ENCODE measurements at regions of chr1 and their contacts with region 1.

Region 1: DNA sequence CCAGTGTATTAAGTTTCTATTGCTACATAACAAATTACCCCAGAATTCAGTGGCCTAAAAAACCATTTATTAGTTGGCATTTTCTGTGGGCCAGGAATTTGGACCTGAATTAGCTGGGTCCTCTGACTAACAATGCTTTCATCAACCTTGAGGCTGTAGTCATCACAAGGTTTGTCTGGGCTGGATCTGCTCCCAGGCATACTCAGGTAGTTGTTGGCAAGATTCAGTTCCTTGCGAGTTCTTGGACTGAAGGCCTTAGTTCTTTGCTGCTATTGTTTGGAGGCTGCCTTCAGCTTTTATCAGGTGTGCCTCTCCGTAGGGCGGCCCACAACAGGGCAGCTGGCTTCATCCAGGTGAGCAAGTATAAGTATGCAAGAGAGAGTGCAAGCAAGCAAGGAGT is 31.4 kb upstream of the DEPDC1 start:
- DNase-seq: no peak
- ATAC-seq: no peak
- H3K4me3 ChIP-seq: no peak overlapping the region
- H3K27ac ChIP-seq: no peak overlapping the region
- H3K4me1 ChIP-seq: no peaks in the 10 kb centered on the region
- H3K27me3 ChIP-seq: no peaks in the 10 kb centered on the region
- CTCF ChIP-seq: no peak
- EP300 ChIP-seq: no peak
- POLR2A ChIP-seq: no peak
- RAD21 ChIP-seq: no peak

Region 2: GRCh38 chr1:68496680-68497357 is 31.4 kb before region 1 on chr1 and contains the start of gene DEPDC1:
- CTCF ChIA-PET with region 1: no interaction called
- POLR2A ChIA-PET with region 1: no interaction called
- in situ Hi-C with region 1: no loop called
- intact Hi-C with region 1: no loop called
- DNase-seq: peak; percentile 86
- ATAC-seq: peak; percentile 98
- H3K4me3 ChIP-seq: peak within 1 kb of the TSS; percentile 73 to 98 (median 90)
- H3K27ac ChIP-seq: peak within 1 kb of the TSS; percentile 77
- H3K4me1 ChIP-seq: peaks cover 21% of the 10 kb centered on the region
- H3K27me3 ChIP-seq: no peaks in the 10 kb centered on the region; a peak in 1 of 5 replicates
- CTCF ChIP-seq: peak; percentile 23
- EP300 ChIP-seq: no peak
- POLR2A ChIP-seq: peak; percentile 63 to 75; a peak in 3 of 4 replicates
- RAD21 ChIP-seq: peak; percentile 45; the same call in 1 of the 2 replicates
- total RNA-seq, gene DEPDC1: 20.2 and 28.0 TPM in 2 replicates

Region 3: DNA sequence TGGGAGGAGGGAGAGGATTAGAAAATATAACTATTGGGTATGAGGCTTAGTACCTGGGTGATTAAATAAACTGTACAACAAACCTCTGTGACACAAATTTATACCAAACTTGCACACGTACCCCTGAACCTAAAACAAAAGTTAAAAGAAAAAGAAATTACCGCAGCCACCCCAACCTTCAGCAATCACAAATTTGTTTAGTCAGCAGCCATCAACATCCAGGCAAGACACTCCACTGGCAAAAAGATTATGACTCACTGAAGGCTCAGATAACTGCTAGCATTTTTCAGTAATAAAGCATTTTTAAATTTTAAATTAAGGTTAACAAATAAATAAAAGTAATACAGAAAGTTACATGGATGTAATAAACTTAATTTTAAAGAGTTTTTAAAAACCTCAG is 17.0 kb before region 1 on chr1:
- CTCF ChIA-PET with region 1: no interaction called
- POLR2A ChIA-PET with region 1: no interaction called
- in situ Hi-C with region 1: no loop called
- intact Hi-C with region 1: loop called (anchors 1 kb)
- DNase-seq: no peak
- ATAC-seq: no peak
- H3K4me3 ChIP-seq: no peak overlapping the region
- H3K27ac ChIP-seq: no peak overlapping the region
- H3K4me1 ChIP-seq: no peaks in the 10 kb centered on the region
- H3K27me3 ChIP-seq: no peaks in the 10 kb centered on the region
- CTCF ChIP-seq: no peak
- EP300 ChIP-seq: no peak
- POLR2A ChIP-seq: no peak
- RAD21 ChIP-seq: no peak

Region 4: DNA sequence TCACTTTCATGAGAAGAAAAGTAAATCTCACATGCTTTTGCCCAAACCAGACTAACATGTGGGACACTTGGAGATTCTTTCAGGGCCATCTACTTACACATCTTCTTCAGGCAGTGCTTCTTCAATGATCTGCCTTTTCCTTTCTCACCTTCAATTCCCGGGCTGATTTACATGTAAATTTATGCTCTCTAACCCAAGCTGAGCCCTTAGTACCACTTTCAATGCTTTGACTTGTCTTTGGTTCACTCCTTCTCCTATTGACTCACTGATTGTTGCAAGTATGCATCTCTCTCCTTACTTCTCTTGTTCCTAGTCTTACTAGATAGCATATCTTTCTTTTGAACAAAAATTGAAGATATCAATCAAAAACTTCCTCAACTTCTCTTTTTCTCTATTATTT is 122.9 kb after region 1 on chr1:
- CTCF ChIA-PET with region 1: no interaction called
- POLR2A ChIA-PET with region 1: no interaction called
- in situ Hi-C with region 1: no loop called
- intact Hi-C with region 1: no loop called
- DNase-seq: no peak
- ATAC-seq: no peak
- H3K4me3 ChIP-seq: no peak overlapping the region
- H3K27ac ChIP-seq: no peak overlapping the region
- H3K4me1 ChIP-seq: no peaks in the 10 kb centered on the region
- H3K27me3 ChIP-seq: no peaks in the 10 kb centered on the region
- CTCF ChIP-seq: no peak
- EP300 ChIP-seq: no peak
- POLR2A ChIP-seq: no peak
- RAD21 ChIP-seq: no peak

Region 5: GRCh38 chr1:68977211-68977610 is 449.0 kb after region 1 on chr1:
- CTCF ChIA-PET with region 1: no interaction called
- POLR2A ChIA-PET with region 1: no interaction called
- in situ Hi-C with region 1: no loop called
- intact Hi-C with region 1: no loop called
- DNase-seq: no peak
- ATAC-seq: no peak
- H3K4me3 ChIP-seq: no peak overlapping the region
- H3K27ac ChIP-seq: no peak overlapping the region
- H3K4me1 ChIP-seq: no peaks in the 10 kb centered on the region
- H3K27me3 ChIP-seq: no peaks in the 10 kb centered on the region
- CTCF ChIP-seq: no peak
- EP300 ChIP-seq: no peak
- POLR2A ChIP-seq: no peak
- RAD21 ChIP-seq: no peak